Heart left ventricle (tissue), 16 donors: ENCODE measurements at regions of chr6 and their contacts with region 1.

Region 1: GRCh38 chr6:159134701-159135364 is 34.4 kb upstream of the FNDC1 start:
- DNase-seq: peak in 4 of 5 donors; percentile 45 to 62 (median 56)
- ATAC-seq: peak; percentile 41 to 77 (median 74)
- H3K4me3 ChIP-seq: no peak overlapping the region
- H3K27ac ChIP-seq: no peak overlapping the region
- H3K4me1 ChIP-seq: peaks cover 0 to 4% (median 0%) of the 10 kb centered on the region in 12 donors
- H3K27me3 ChIP-seq: peaks cover 0 to 15% (median 0%) of the 10 kb centered on the region in 9 donors
- CTCF ChIP-seq: peak; percentile 79 to 97 (median 86)
- POLR2A ChIP-seq: no peak

Region 2: DNA sequence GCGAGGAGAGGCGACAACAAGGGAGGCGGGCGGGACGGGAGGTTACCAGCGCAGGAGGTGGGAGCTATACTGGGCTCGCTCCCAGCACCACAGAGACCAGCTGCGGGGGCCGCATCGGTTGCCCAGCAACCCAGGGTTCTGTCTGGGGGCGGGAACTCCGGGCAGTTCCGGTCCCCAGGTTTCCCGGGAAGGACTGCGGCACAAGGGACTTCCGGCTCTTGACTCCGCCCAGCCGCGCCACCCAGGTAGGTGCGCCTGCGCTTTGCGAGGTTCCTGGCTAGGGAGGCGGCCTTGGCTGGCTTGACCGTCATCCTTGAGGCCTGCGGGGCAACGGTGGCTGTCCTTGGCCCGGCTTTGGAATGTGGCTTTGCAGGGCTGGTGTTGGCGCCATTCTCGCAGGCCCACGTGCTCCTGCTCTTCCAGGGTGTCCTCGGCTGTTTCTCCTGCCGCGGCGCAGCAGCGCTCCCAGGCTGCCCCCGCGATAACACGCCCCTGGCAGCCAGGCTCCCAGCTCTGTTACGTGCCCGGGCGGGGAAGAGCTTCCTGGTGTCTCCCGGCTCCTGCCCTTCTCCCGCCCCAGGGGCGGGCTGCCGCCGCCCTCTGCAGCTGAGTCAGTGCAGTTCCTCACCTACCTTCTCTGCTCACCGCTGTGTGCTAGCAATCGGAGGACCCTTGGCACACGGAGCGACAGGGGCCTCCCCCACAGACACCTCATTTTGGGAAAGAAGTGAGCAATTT is 135.0 kb before region 1 on chr6 and contains the start of gene RSPH3:
- intact Hi-C with region 1: loop called in 7 of 10 experiments (anchors 5 to 10 kb)
- DNase-seq: peak; percentile 91 to 96 (median 95)
- ATAC-seq: peak; percentile 95 to 97 (median 96)
- H3K4me3 ChIP-seq: peak within 1 kb of the TSS; percentile 36 to 85 (median 72)
- H3K27ac ChIP-seq: peak within 1 kb of the TSS; percentile 29 to 90 (median 87)
- H3K4me1 ChIP-seq: peaks cover 0 to 27% (median 11%) of the 10 kb centered on the region in 12 donors
- H3K27me3 ChIP-seq: no peaks in the 10 kb centered on the region
- CTCF ChIP-seq: peak in 4 of 12 donors; percentile 26 to 46 (median 40)
- POLR2A ChIP-seq: peak in 1 of 2 donors; percentile 69
- total RNA-seq, gene RSPH3: 6.2 to 13.2 (median 9.6) TPM

Region 3: DNA sequence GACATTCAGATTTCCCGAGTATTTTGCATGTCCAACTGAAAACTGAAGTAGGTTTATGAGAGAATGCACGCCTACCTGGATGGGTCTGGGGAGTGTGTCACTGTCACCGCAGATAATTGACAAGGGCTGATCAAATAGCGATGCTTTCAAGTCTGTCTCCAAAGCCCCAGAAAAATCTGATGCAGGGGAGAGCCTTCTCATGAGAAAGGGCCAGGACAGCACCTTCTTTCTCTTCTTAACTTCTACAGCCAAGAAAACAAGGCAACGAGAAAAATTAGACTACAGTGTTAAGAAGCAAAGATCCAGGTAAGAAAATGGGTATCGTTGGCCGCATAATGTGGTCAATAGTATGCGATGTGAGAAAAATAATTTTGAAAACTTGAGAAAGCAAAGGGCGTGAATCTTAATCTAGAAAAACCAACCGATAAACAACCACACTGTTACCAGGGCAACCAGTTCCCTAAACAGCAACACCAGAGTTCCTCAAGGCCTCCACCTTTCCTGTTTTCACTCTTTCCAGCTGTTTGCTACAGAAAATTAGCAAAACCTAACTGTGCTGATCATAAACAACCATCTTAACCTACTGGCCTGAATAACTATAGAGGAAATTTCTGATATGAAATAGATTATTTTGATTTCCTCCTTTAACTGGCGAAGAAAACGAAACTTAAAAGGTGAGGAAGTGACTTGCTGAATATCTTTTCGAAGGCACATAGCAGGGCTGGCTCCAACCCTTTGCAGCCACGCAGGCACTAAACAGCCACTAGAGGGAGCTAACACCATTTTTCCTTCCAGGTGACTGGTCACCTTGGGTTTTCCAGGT is 92.6 kb before region 1 on chr6:
- intact Hi-C with region 1: loop called (anchors 1 to 10 kb)
- DNase-seq: peak in 4 of 5 donors; percentile 44 to 68 (median 53)
- ATAC-seq: peak; percentile 58 to 82 (median 78)
- H3K4me3 ChIP-seq: peak overlapping the region in 6 of 12 donors; percentile 29 to 70 (median 42)
- H3K27ac ChIP-seq: peak overlapping the region in 7 of 12 donors; percentile 9 to 90 (median 36)
- H3K4me1 ChIP-seq: peaks cover 0 to 70% (median 8%) of the 10 kb centered on the region in 12 donors
- H3K27me3 ChIP-seq: peaks cover 0 to 5% (median 0%) of the 10 kb centered on the region in 9 donors
- CTCF ChIP-seq: peak; percentile 81 to 98 (median 91)
- POLR2A ChIP-seq: no peak